A673 (cell line): ENCODE measurements at regions of chr11 and their contacts with region 1.

Region 1: GRCh38 chr11:109946322-109946846 is 146.8 kb upstream of the ZC3H12C start:
- DNase-seq: peak; percentile 97
- H3K4me3 ChIP-seq: peak overlapping the region; percentile 28
- H3K27ac ChIP-seq: peak overlapping the region; percentile 89
- H3K4me1 ChIP-seq: peaks cover 18% of the 10 kb centered on the region
- H3K27me3 ChIP-seq: no peaks in the 10 kb centered on the region
- CTCF ChIP-seq: peak; percentile 100

Region 2: GRCh38 chr11:109828387-109828786 is 118.0 kb before region 1 on chr11:
- CTCF ChIA-PET with region 1: no interaction called
- POLR2A ChIA-PET with region 1: no interaction called
- intact Hi-C with region 1: no loop called
- DNase-seq: no peak
- H3K4me3 ChIP-seq: no peak overlapping the region
- H3K27ac ChIP-seq: no peak overlapping the region
- H3K4me1 ChIP-seq: no peaks in the 10 kb centered on the region
- H3K27me3 ChIP-seq: no peaks in the 10 kb centered on the region
- CTCF ChIP-seq: no peak

Region 3: DNA sequence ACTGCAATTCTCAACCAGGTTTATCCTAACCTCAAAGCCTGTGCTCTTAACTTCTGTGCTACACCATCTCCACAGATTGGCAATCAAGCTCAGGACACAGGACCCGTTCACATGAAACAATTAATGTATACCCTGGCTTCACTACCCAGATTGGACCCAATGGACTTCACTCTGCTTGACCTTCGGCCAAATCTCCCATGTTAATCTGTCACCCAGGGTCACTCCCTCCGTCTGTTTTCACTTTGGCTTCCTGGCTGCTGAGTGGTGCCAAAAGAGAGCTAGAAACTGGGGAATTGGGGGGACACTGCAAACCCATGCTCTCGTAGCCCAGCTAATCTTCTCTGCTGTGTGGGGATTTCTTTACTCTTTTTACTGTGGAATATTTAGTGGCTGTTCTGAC is 69.3 kb before region 1 on chr11:
- CTCF ChIA-PET with region 1: no interaction called
- POLR2A ChIA-PET with region 1: no interaction called
- intact Hi-C with region 1: no loop called
- DNase-seq: no peak
- H3K4me3 ChIP-seq: no peak overlapping the region
- H3K27ac ChIP-seq: no peak overlapping the region
- H3K4me1 ChIP-seq: no peaks in the 10 kb centered on the region
- H3K27me3 ChIP-seq: peaks cover 5% of the 10 kb centered on the region
- CTCF ChIP-seq: no peak

Region 4: GRCh38 chr11:109971184-109971523 is 24.8 kb after region 1 on chr11:
- CTCF ChIA-PET with region 1: no interaction called
- POLR2A ChIA-PET with region 1: no interaction called
- intact Hi-C with region 1: loop called (anchors 2 kb)
- DNase-seq: peak; percentile 99
- H3K4me3 ChIP-seq: peak overlapping the region; percentile 23
- H3K27ac ChIP-seq: peak overlapping the region; percentile 88
- H3K4me1 ChIP-seq: peaks cover 48% of the 10 kb centered on the region
- H3K27me3 ChIP-seq: no peaks in the 10 kb centered on the region
- CTCF ChIP-seq: no peak

Region 5: GRCh38 chr11:110092515-110093404 is 146.4 kb after region 1 on chr11 and contains the start of gene ZC3H12C:
- CTCF ChIA-PET with region 1: interaction called, 4 read pairs
- POLR2A ChIA-PET with region 1: no interaction called
- intact Hi-C with region 1: loop called (anchors 1 kb)
- DNase-seq: peak; percentile 97
- H3K4me3 ChIP-seq: peak within 1 kb of the TSS; percentile 77
- H3K27ac ChIP-seq: peak within 1 kb of the TSS; percentile 95
- H3K4me1 ChIP-seq: peaks cover 38% of the 10 kb centered on the region
- H3K27me3 ChIP-seq: no peaks in the 10 kb centered on the region
- CTCF ChIP-seq: peak; percentile 53; the same call in 1 of the 2 replicates
- total RNA-seq, gene ZC3H12C: 18.7 and 21.7 TPM in 2 replicates

Region 6: DNA sequence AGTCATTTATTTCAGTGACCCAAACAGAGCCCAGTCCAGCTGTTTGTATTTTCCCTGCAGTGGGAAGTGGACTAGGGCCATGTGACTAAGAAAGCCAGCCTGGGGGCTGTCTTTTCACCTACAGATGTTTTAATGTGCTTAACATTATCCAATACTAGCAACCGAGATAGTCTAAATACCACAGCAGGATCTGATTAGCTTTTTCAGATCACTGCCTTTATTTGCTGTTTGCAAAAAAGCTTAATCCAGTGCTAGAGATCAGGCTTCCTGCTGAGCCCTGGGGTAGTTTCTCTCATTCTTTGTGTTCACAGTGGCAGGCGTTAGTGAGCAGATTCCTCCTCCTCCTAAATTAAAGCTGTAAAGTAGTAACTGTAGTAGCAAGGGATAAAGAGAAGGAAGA is 181.8 kb after region 1 on chr11:
- CTCF ChIA-PET with region 1: no interaction called
- POLR2A ChIA-PET with region 1: interaction called, 3 read pairs
- intact Hi-C with region 1: loop called (anchors 1 kb)
- DNase-seq: peak; percentile 98
- H3K4me3 ChIP-seq: peak overlapping the region; percentile 7
- H3K27ac ChIP-seq: peak overlapping the region; percentile 70
- H3K4me1 ChIP-seq: peaks cover 78% of the 10 kb centered on the region
- H3K27me3 ChIP-seq: no peaks in the 10 kb centered on the region
- CTCF ChIP-seq: no peak

Region 7: DNA sequence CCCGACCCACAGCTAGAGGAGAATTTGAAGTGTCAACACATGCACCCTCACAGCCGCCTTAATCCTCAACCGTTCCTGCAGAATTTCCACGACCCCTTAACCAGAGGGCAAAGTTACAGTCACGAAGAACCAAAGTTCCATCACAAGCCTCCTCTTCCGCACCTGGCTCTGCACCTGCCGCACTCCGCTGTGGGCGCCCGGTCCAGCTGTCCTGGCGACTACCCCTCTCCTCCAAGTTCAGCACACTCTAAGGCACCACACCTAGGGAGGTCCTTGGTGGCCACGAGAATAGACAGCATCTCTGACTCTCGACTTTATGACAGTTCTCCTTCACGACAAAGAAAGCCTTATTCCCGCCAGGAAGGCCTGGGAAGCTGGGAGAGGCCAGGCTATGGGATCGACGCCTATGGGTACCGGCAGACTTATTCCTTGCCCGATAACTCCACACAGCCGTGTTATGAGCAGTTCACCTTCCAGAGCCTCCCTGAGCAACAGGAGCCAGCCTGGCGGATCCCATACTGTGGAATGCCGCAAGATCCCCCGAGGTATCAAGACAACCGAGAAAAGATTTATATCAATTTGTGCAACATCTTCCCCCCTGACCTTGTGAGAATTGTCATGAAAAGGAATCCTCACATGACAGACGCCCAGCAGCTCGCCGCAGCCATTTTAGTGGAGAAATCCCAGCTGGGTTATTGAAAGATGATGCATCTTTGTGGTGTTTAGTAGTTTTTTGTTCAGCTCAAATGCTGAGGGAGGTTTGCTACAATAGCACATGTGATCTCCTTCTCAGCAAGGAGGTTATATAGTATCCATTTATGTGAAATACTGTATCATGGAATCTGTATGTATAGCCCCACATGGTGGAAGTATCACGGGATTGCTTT is 218.9 kb after region 1 on chr11:
- CTCF ChIA-PET with region 1: no interaction called
- POLR2A ChIA-PET with region 1: no interaction called
- intact Hi-C with region 1: no loop called
- DNase-seq: no peak
- H3K4me3 ChIP-seq: no peak overlapping the region
- H3K27ac ChIP-seq: no peak overlapping the region
- H3K4me1 ChIP-seq: peaks cover 4% of the 10 kb centered on the region
- H3K27me3 ChIP-seq: no peaks in the 10 kb centered on the region
- CTCF ChIP-seq: no peak; the same call in 1 of the 2 replicates

Region 8: GRCh38 chr11:110200241-110200640 is 253.9 kb after region 1 on chr11:
- CTCF ChIA-PET with region 1: interaction called, 5 read pairs
- POLR2A ChIA-PET with region 1: no interaction called
- intact Hi-C with region 1: loop called (anchors 2 kb)
- DNase-seq: no peak
- H3K4me3 ChIP-seq: no peak overlapping the region
- H3K27ac ChIP-seq: peak overlapping the region; percentile 16
- H3K4me1 ChIP-seq: peaks cover 38% of the 10 kb centered on the region
- H3K27me3 ChIP-seq: no peaks in the 10 kb centered on the region
- CTCF ChIP-seq: no peak

Region 9: GRCh38 chr11:110429731-110430266 is 483.4 kb after region 1 on chr11 and contains the start of gene FDX1:
- CTCF ChIA-PET with region 1: no interaction called
- POLR2A ChIA-PET with region 1: interaction called, 3 read pairs
- intact Hi-C with region 1: loop called (anchors 2 kb)
- DNase-seq: peak; percentile 96
- H3K4me3 ChIP-seq: peak within 1 kb of the TSS; percentile 91
- H3K27ac ChIP-seq: peak within 1 kb of the TSS; percentile 93
- H3K4me1 ChIP-seq: peaks cover 44% of the 10 kb centered on the region
- H3K27me3 ChIP-seq: no peaks in the 10 kb centered on the region
- CTCF ChIP-seq: peak; percentile 52
- total RNA-seq, gene FDX1: 59.5 and 62.3 TPM in 2 replicates